Activated T-helper 2 cell treated with anti-CD3 and anti-CD28 coated beads, Interferon-gamma antibody, Interleukin-2, Interleukin-4, amounts not matched to agents 10 μg/mL and 5 μg/mL and 100 μg/mL, durations not matched to agents 14 hours and 24 hours and 36 hours (primary cell): ENCODE measurements at regions of chr15 and their contacts with region 1.

Region 1: DNA sequence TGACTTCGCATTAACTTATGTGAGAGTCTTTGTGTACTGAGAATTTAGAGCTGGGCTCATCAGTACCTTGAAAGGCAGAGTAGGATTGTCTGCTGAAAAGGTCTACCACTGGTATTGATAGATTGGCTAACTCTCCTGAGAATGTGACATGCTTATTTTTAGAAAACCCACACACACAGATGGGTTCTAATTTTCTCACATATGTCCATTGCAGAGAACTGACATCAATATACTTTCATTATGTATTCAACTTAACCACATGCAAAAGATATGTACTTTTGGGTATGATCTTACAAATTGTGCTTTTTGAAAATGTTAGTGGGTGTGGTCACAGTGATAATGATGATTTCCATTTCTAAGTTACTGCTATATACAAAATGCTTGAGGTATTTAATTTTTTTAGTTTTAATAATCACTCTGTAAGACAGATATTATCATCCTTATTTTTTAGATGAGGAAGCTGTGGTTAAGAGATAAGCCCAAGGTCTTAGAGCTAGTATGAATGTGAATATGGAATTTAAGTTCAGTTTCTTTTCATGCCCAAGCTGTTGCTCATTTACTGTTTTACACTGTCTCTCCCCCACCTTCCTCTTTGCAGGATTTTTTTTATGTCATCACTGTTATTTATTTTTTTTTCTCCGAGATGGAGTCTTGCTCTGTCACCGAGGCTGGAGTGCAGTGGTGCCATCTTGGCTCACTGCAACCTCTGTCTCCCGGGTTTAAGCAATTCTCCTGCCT is 22.3 kb downstream of the MAP2K5 start:
- DNase-seq: no peak
- H3K4me3 Mint-ChIP-seq: no peak overlapping the region
- H3K27ac Mint-ChIP-seq: no peak overlapping the region
- H3K4me1 Mint-ChIP-seq: peaks cover 20% of the 10 kb centered on the region
- H3K27me3 Mint-ChIP-seq: no peaks in the 10 kb centered on the region

Region 2: GRCh38 chr15:67521029-67521811 is 43.6 kb before region 1 on chr15 and contains the start of gene C15orf61:
- intact Hi-C with region 1: loop called (anchors 5 kb)
- DNase-seq: peak; percentile 80
- H3K4me3 Mint-ChIP-seq: peak within 1 kb of the TSS; percentile 90
- H3K27ac Mint-ChIP-seq: peak within 1 kb of the TSS; percentile 85
- H3K4me1 Mint-ChIP-seq: peaks cover 19% of the 10 kb centered on the region
- H3K27me3 Mint-ChIP-seq: no peaks in the 10 kb centered on the region
- total RNA-seq, gene C15orf61: 5.4 and 5.6 TPM in 2 replicates

Region 3: GRCh38 chr15:67531379-67532059 is 33.3 kb before region 1 on chr15:
- intact Hi-C with region 1: loop called (anchors 1 kb)
- DNase-seq: no peak
- H3K4me3 Mint-ChIP-seq: no peak overlapping the region
- H3K27ac Mint-ChIP-seq: no peak overlapping the region
- H3K4me1 Mint-ChIP-seq: peaks cover 20% of the 10 kb centered on the region
- H3K27me3 Mint-ChIP-seq: peaks cover 7% of the 10 kb centered on the region